Activated CD4-positive, alpha-beta T cell treated with anti-CD3 and anti-CD28 coated beads, Interleukin-2, amount 10 ng/mL, durations not matched to agents 24 days and 14 days (primary cell): ENCODE measurements at regions of chr19 and their contacts with region 1.

Region 1: GRCh38 chr19:58154679-58155648 is 4.4 kb upstream of the ZNF329 start:
- DNase-seq: peak; percentile 98
- H3K4me3 Mint-ChIP-seq: peak overlapping the region; percentile 66
- H3K27ac Mint-ChIP-seq: peak overlapping the region; percentile 69
- H3K4me1 Mint-ChIP-seq: peaks cover 6% of the 10 kb centered on the region
- H3K27me3 Mint-ChIP-seq: no peaks in the 10 kb centered on the region

Region 2: DNA sequence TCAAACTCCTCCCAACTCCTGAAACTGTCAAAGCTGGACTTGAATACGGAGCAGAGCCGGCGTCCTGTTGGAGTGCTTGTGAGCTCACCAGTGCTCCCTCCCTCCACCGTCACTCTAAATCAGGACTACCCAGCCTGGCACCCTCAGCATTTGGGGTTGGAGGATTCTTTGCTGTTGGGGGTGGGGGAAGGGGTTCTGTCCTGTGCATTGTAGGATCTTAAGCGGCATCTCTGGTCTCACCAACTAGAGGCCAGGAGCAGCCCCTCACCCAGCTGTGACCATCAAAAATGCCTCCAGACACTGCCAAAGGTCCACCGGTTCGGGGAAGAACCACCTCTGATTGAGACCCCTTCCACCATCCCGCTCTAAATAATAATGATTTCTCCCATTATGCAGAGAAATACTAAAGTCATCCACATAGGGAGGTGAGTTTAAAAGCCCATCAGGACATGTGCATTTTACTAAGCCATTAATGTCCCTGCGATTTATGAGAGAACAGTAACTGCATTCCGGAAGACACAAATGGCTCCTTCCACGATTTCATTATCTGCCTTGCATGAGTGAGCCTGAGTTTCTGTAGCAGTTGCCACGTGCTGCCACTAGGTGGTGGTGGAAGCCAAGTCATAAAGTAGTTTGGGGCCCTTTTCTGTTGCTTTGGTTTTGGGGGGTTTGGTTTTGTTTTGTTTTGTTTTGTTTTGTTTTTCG is 1051.2 kb before region 1 on chr19:
- intact Hi-C with region 1: loop called (anchors 5 kb)
- DNase-seq: peak; percentile 81
- H3K4me3 Mint-ChIP-seq: no peak overlapping the region
- H3K27ac Mint-ChIP-seq: no peak overlapping the region
- H3K4me1 Mint-ChIP-seq: no peaks in the 10 kb centered on the region
- H3K27me3 Mint-ChIP-seq: no peaks in the 10 kb centered on the region

Region 3: DNA sequence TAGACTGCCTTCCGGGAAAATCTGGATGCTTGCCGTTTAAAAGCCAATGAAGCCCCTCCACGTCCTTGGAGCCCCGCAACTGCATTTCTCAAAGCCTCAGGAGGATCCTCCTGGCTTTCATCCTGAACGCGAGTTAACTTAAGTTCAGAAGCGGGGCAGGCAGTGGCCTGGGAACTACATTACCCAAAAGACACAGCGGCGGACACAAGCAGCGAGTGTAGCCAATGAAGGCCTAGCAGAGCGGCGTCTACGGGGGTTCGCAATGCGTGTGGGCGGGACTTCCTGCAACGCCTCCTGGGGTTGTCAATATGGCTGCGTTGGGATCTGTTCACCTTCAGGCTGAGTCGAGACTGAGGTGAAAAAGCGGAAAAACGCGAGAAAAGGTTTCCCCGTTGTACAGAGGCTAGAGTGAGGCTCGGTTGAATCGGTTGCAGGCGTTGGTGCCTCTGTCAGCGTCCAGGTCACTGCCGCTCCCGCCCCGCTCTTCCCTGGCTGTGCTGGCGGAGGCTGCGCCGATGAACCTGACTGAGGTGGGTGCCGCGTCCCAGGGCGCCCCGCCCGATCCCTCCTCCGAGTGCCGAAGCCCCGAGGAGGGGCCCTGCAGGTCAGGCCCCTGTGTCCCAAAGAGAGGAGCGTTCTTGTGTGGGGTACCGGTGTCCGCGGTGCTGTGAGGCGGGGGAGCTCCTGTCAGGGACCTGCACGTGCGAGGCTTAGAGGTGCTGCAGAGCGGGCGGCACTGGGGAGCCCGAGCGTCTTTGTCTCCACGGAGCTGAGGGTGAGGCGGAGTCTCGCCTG is 743.9 kb before region 1 on chr19 and contains the start of gene ZNF17:
- intact Hi-C with region 1: loop called (anchors 1 kb)
- DNase-seq: peak; percentile 97
- H3K4me3 Mint-ChIP-seq: peak within 1 kb of the TSS; percentile 94
- H3K27ac Mint-ChIP-seq: peak within 1 kb of the TSS; percentile 80
- H3K4me1 Mint-ChIP-seq: peaks cover 14% of the 10 kb centered on the region
- H3K27me3 Mint-ChIP-seq: no peaks in the 10 kb centered on the region
- total RNA-seq, gene ZNF17: 7.4 and 7.8 TPM in 2 replicates

Region 4: GRCh38 chr19:57477191-57478008 is 677.6 kb before region 1 on chr19 and contains the start of gene ZNF772:
- intact Hi-C with region 1: loop called (anchors 10 kb)
- DNase-seq: peak; percentile 95
- H3K4me3 Mint-ChIP-seq: peak within 1 kb of the TSS; percentile 82
- H3K27ac Mint-ChIP-seq: peak within 1 kb of the TSS; percentile 82
- H3K4me1 Mint-ChIP-seq: peaks cover 8% of the 10 kb centered on the region
- H3K27me3 Mint-ChIP-seq: no peaks in the 10 kb centered on the region
- total RNA-seq, gene ZNF772: 2.5 and 2.8 TPM in 2 replicates

Region 5: GRCh38 chr19:58002384-58003173 is 152.4 kb before region 1 on chr19 and contains the start of gene ZNF606:
- intact Hi-C with region 1: loop called (anchors 2 kb)
- DNase-seq: peak; percentile 95
- H3K4me3 Mint-ChIP-seq: peak within 1 kb of the TSS; percentile 84
- H3K27ac Mint-ChIP-seq: peak within 1 kb of the TSS; percentile 88
- H3K4me1 Mint-ChIP-seq: peaks cover 11% of the 10 kb centered on the region
- H3K27me3 Mint-ChIP-seq: no peaks in the 10 kb centered on the region
- total RNA-seq, gene ZNF606: 6.6 and 7.0 TPM in 2 replicates

Region 6: DNA sequence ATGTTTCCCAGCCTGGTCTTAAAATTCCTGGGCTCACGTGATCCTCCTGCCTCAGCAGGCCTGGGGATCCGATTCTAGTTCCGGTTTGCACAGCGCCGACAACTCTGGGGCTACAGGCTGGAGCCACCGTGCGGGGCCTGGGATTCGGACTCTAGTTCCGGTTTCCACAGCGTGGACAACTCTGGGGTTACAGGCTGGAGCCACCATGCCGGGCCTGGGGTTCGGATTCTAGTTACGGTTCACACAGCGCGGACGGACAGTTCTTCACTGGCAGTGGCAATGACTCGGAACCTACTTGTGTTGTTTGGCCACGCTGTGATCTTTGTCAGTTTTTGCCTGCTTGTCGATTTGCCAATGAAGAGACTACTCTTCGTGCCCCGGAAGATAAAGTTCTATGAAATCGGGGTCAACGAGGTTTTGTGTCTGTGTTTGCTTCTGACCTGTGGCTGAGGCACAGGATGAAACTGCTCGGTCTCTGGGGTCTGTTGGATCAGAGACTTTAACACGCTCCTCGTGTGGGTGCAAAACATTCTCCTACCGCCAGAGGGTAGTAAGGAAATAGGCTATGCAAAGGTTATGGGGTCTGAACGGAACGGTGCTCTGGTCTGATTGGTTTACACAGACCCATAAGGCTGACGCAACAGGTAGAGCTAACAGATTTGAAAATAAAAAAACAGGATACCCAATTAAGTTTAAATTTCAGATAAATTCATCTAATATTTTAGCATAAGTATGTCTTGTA is 133.3 kb before region 1 on chr19:
- intact Hi-C with region 1: loop called (anchors 5 kb)
- DNase-seq: peak; percentile 61
- H3K4me3 Mint-ChIP-seq: no peak overlapping the region
- H3K27ac Mint-ChIP-seq: no peak overlapping the region
- H3K4me1 Mint-ChIP-seq: no peaks in the 10 kb centered on the region
- H3K27me3 Mint-ChIP-seq: no peaks in the 10 kb centered on the region

Region 7: DNA sequence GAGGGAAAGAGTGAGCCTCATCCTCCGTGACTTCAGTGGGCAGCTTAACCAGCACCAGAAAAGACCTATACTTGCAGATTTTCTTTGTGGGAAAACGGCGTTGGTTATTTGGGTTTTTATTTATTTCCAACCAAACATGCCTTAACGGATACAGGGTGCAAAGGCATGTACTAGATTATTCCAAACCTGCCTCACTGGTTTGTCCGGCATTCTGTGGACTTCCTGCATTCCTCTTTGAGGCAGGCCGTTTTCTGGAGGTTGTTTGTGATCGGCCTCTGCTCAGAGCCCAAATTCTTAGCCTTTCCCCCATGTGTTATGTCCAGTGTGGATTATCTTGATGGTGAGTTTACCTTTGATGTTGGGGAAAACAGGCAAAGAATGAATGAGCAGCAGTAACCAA is 23.2 kb after region 1 on chr19:
- intact Hi-C with region 1: no loop called
- DNase-seq: no peak
- H3K4me3 Mint-ChIP-seq: no peak overlapping the region
- H3K27ac Mint-ChIP-seq: no peak overlapping the region
- H3K4me1 Mint-ChIP-seq: peaks cover 8% of the 10 kb centered on the region
- H3K27me3 Mint-ChIP-seq: no peaks in the 10 kb centered on the region

Region 8: GRCh38 chr19:58317476-58318072 is 162.6 kb after region 1 on chr19:
- intact Hi-C with region 1: no loop called
- DNase-seq: peak; percentile 72
- H3K4me3 Mint-ChIP-seq: no peak overlapping the region
- H3K27ac Mint-ChIP-seq: no peak overlapping the region
- H3K4me1 Mint-ChIP-seq: no peaks in the 10 kb centered on the region
- H3K27me3 Mint-ChIP-seq: no peaks in the 10 kb centered on the region